ENCODE measurements at regions of chr1 and their contacts with region 1.

Region 1: DNA sequence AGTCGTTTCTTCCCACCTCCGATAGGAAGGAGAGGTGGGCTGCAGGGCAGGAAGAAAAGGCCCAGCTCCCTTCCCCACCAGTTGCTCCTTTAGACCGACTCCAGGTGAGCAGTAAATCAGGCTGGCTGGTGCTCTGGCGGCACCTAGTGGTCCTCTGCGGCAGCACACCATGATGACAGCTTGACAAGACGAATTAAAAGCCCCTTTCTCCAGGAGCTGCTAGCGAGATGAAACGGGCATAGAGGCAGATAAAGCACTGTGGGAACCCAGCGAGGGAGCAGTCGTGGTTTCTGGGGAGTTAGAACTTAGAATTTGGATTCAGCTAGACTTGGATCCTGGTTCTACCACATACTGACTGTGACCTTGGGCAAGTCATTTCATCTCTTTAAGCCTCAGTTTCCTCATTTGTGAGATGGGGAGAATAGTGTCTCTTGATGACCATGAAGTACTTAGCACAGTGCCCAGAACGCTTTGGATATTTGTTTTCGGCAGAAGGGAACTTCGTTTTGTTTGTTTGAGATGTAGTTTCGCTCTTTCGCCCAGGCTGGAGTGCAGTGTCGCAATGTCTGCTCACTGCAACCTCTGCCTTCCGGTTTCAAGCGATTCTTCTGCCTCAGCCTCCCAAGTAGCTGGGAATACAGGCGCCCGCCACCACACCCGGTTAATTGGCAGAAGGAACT is 21.8 kb upstream of the COL9A2 start:
- DNase-seq: peak; percentile 87
- H3K4me3 ChIP-seq: no peak overlapping the region
- H3K27ac ChIP-seq: no peak overlapping the region
- H3K4me1 ChIP-seq: no peaks in the 10 kb centered on the region
- H3K27me3 ChIP-seq: peaks cover 0 to 7% of the 10 kb centered on the region in 2 experiments
- CTCF ChIP-seq: peak; percentile 98 to 99
- POLR2A ChIP-seq: no peak

Region 2: GRCh38 chr1:40096977-40097782 is 241.7 kb before region 1 on chr1 and contains the start of gene PPT1:
- CTCF ChIA-PET with region 1: interaction called, 9 read pairs
- POLR2A ChIA-PET with region 1: no interaction called
- dilution Hi-C with region 1: no loop called
- intact Hi-C with region 1: loop called (anchors 5 kb)
- DNase-seq: peak; percentile 75
- H3K4me3 ChIP-seq: peak within 1 kb of the TSS; percentile 55 to 75 (median 68)
- H3K27ac ChIP-seq: no peak within 1 kb of the TSS
- H3K4me1 ChIP-seq: peaks cover 14% of the 10 kb centered on the region
- H3K27me3 ChIP-seq: peaks cover 2 to 7% of the 10 kb centered on the region in 2 experiments
- CTCF ChIP-seq: peak in 1 of 2 donors; percentile 21
- POLR2A ChIP-seq: peak; percentile 85
- total RNA-seq, gene PPT1: 121 and 131 TPM in 2 replicates

Region 3: GRCh38 chr1:40153073-40153770 is 185.7 kb before region 1 on chr1:
- CTCF ChIA-PET with region 1: interaction called, 362 read pairs
- POLR2A ChIA-PET with region 1: no interaction called
- dilution Hi-C with region 1: no loop called
- intact Hi-C with region 1: loop called (anchors 1 kb)
- DNase-seq: peak; percentile 76
- H3K4me3 ChIP-seq: no peak overlapping the region
- H3K27ac ChIP-seq: no peak overlapping the region
- H3K4me1 ChIP-seq: no peaks in the 10 kb centered on the region
- H3K27me3 ChIP-seq: peaks cover 16 to 35% of the 10 kb centered on the region in 2 experiments
- CTCF ChIP-seq: peak; percentile 57 to 70
- POLR2A ChIP-seq: no peak

Region 4: GRCh38 chr1:40315239-40315794 is 23.6 kb before region 1 on chr1:
- CTCF ChIA-PET with region 1: interaction called, 37 read pairs
- POLR2A ChIA-PET with region 1: interaction called, 3 read pairs
- dilution Hi-C with region 1: no loop called
- intact Hi-C with region 1: no loop called
- DNase-seq: peak; percentile 86
- H3K4me3 ChIP-seq: peak overlapping the region in 2 of 3 experiments; percentile 18 to 24
- H3K27ac ChIP-seq: no peak overlapping the region
- H3K4me1 ChIP-seq: peaks cover 4% of the 10 kb centered on the region
- H3K27me3 ChIP-seq: peaks cover 23 to 33% of the 10 kb centered on the region in 2 experiments
- CTCF ChIP-seq: peak; percentile 92 to 99
- POLR2A ChIP-seq: no peak

Region 5: DNA sequence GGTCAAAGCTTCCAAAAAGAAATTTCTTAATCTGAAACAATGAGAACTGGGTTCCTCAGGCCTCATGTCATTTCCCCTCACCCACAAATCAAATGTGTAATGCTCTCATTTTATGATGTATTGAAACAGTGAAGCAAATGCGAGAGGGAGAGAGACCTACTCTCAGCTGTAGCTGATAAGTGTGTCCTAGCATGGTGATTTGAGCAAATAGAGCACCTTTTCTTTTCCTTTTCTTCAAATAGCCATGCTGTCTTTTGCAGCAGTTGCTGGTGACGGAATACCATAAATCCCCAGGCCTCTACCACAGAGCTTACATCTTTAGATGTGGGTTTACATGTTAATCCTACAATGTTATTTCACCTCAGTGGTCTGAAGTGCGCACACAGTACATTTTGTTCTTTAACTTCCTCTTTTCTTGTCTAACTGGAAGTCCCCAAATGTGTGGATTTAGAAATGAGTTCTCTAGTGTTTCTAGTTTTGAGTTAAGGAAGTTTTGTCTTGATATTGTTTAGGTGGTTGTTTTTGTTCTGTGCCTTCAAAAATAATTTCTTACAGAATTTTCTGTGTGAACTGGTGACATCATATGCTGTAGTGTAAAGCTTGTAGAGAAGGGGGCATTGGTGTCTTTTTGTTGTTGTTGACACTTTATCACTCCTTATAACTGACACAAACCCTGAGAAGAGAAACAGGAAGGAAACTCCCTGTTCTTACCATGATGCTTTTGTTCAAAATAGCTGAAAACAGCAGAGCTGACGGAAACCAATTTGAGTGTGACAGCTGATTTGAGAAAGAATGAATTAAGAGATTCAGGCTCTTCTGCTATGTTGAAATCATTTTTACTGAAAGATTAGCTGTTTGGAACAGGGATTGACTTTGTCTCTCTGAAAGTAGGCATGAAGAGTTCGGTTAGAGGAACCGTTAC is 46.8 kb after region 1 on chr1:
- CTCF ChIA-PET with region 1: interaction called, 28 read pairs
- POLR2A ChIA-PET with region 1: no interaction called
- dilution Hi-C with region 1: no loop called
- intact Hi-C with region 1: no loop called
- DNase-seq: peak; percentile 11
- H3K4me3 ChIP-seq: no peak overlapping the region
- H3K27ac ChIP-seq: no peak overlapping the region
- H3K4me1 ChIP-seq: peaks cover 8% of the 10 kb centered on the region
- H3K27me3 ChIP-seq: no peaks in the 10 kb centered on the region
- CTCF ChIP-seq: no peak
- POLR2A ChIP-seq: no peak

Region 6: GRCh38 chr1:40438391-40439015 is 99.6 kb after region 1 on chr1:
- CTCF ChIA-PET with region 1: interaction called, 13 read pairs
- POLR2A ChIA-PET with region 1: no interaction called
- dilution Hi-C with region 1: no loop called
- intact Hi-C with region 1: no loop called
- DNase-seq: peak; percentile 51
- H3K4me3 ChIP-seq: no peak overlapping the region
- H3K27ac ChIP-seq: no peak overlapping the region
- H3K4me1 ChIP-seq: no peaks in the 10 kb centered on the region
- H3K27me3 ChIP-seq: no peaks in the 10 kb centered on the region
- CTCF ChIP-seq: peak; percentile 67 to 82
- POLR2A ChIP-seq: no peak

Region 7: GRCh38 chr1:40939320-40940059 is 600.6 kb after region 1 on chr1:
- CTCF ChIA-PET with region 1: no interaction called
- POLR2A ChIA-PET with region 1: no interaction called
- dilution Hi-C with region 1: no loop called
- intact Hi-C with region 1: no loop called
- DNase-seq: no peak
- H3K4me3 ChIP-seq: no peak overlapping the region
- H3K27ac ChIP-seq: no peak overlapping the region
- H3K4me1 ChIP-seq: peaks cover 4% of the 10 kb centered on the region
- H3K27me3 ChIP-seq: no peaks in the 10 kb centered on the region
- CTCF ChIP-seq: no peak
- POLR2A ChIP-seq: no peak